BJ (cell line): ENCODE measurements at regions of chr5 and their contacts with region 1.

Region 1: GRCh38 chr5:160342403-160342941 is 28.0 kb downstream of the C1QTNF2 start:
- DNase-seq: peak; percentile 70
- H3K4me3 ChIP-seq: no peak overlapping the region
- H3K27me3 ChIP-seq: no peaks in the 10 kb centered on the region
- CTCF ChIP-seq: no peak

Region 2: GRCh38 chr5:160021831-160022446 is 320.5 kb before region 1 on chr5:
- CTCF ChIA-PET with region 1: interaction called, 193 read pairs
- POLR2A ChIA-PET with region 1: no interaction called
- DNase-seq: no peak
- H3K4me3 ChIP-seq: no peak overlapping the region
- H3K27me3 ChIP-seq: no peaks in the 10 kb centered on the region
- CTCF ChIP-seq: peak; percentile 69

Region 3: DNA sequence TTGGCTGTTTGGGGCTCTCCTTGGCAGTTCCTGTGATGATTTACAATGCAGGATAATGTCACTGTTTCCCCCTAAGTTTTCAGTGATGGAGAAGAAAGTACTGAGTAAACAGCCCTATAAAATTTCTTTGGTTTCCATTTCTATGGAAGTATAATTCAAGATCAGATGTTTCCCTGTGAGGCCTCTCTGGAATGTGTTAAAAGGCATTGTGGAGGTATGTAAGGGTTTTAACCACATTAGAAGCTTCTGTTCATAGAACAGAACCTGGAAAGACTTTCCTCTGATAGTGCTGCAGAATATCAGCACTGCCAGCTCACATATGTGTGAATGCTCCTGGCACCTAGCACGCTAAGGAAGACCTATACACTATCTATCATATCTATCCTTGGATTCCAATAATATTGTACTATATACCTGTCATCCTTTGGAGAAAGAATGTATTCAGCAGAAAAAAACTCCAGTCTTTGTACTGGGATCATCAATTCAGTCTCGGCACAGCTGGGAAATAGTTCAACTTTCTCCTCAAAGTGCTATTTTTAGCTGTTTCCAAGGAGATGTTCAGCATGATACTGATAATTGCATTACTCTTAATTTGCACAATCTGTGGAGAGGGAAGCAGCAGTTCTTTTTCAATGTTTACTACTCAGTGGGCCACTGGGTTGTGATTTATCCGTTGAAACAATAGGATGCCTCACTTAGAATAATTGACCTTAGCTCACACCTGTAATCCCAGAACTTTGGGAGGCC is 311.7 kb before region 1 on chr5:
- CTCF ChIA-PET with region 1: interaction called, 193 read pairs
- POLR2A ChIA-PET with region 1: no interaction called
- DNase-seq: no peak
- H3K4me3 ChIP-seq: no peak overlapping the region
- H3K27me3 ChIP-seq: no peaks in the 10 kb centered on the region
- CTCF ChIP-seq: no peak

Region 4: GRCh38 chr5:160081495-160081894 is 261.0 kb before region 1 on chr5:
- CTCF ChIA-PET with region 1: interaction called, 28 read pairs
- POLR2A ChIA-PET with region 1: no interaction called
- DNase-seq: no peak
- H3K4me3 ChIP-seq: no peak overlapping the region
- H3K27me3 ChIP-seq: no peaks in the 10 kb centered on the region
- CTCF ChIP-seq: no peak

Region 5: DNA sequence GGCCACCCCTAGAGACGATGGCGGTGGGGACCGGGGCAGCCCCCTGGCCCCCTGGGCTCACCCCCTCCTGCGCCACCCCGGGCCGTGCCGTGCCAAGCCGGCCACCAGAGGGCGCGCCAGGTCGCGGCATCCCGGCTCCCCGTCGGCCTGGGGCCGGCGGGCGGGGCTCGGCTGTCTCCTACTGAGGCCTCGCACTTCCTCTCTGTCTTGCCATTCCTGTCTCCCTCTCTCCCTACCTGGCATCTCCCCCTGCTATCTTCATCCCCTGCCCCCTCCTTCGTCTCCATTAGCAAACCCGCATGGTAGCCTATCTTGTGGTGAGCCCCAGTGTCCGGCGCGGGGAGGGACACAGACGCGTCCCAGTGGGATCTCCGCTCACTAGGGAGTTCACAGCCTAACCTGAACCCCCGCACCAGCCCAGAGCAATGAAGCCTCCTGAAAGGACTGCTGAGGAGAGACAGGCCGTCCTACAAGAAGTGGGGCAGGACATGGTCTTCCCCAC is 143.0 kb before region 1 on chr5:
- CTCF ChIA-PET with region 1: interaction called, 32 read pairs
- POLR2A ChIA-PET with region 1: no interaction called
- DNase-seq: no peak
- H3K4me3 ChIP-seq: peak overlapping the region; percentile 37
- H3K27me3 ChIP-seq: no peaks in the 10 kb centered on the region
- CTCF ChIP-seq: peak; percentile 51

Region 6: GRCh38 chr5:160357861-160358411 is 15.5 kb after region 1 on chr5:
- CTCF ChIA-PET with region 1: interaction called, 34 read pairs
- POLR2A ChIA-PET with region 1: no interaction called
- DNase-seq: no peak
- H3K4me3 ChIP-seq: no peak overlapping the region
- H3K27me3 ChIP-seq: no peaks in the 10 kb centered on the region; the same call in 1 of the 2 replicates
- CTCF ChIP-seq: no peak

Region 7: GRCh38 chr5:160390787-160391696 is 48.6 kb after region 1 on chr5:
- CTCF ChIA-PET with region 1: interaction called, 27 read pairs
- POLR2A ChIA-PET with region 1: no interaction called
- DNase-seq: no peak
- H3K4me3 ChIP-seq: no peak overlapping the region
- H3K27me3 ChIP-seq: no peaks in the 10 kb centered on the region
- CTCF ChIP-seq: peak; percentile 51